ENCODE measurements at regions of chr22 and their contacts with region 1.

Region 1: DNA sequence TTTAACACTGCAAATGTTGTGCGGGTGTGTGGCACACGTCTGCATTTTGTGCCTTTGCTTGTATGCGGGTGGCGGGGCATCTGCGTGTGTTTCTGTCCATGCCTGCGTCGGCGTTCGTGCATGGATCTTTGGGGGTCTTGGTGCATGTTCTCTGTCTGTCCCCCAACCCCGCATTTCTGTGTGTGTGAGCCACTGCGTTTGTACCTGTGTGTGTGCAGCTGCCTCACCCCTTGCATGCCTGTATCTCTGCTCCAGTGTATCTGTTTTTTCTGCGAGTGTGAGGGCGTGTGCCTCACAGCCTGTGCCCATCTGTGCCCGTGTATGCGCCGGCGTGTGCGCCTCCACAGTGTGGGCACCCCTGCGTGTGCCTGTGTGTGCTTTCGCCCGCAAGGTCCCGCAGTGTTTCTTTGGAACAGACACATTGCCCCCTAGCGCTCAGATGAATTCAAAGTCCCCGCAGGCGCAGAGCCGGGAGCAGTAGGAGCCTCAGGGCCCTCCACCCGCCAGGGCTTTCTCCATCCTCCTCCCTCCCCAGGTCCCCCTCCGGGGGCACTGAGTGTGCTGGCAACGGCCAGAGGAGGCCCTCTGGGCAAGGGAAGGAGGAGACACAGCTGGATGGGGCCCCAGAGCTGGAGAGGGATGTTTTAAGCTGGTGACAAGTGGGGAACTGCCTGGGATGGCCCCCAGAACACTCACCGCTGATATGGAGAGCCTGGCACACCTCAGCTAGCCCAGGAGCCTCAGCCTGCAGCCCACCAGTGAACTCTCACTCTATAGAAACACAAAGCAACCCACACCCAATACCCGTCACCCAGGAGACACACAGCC is 3.1 kb upstream of the MN1 start:
- DNase-seq: peak; percentile 70 to 80
- ATAC-seq: peak; percentile 23 to 68 (median 61)
- H3K4me3 ChIP-seq: no peak overlapping the region
- H3K27ac ChIP-seq: no peak overlapping the region
- H3K4me1 ChIP-seq: peaks cover 0 to 34% (median 22%) of the 10 kb centered on the region in 9 donors
- H3K27me3 ChIP-seq: peaks cover 0 to 49% (median 0%) of the 10 kb centered on the region in 7 donors
- CTCF ChIP-seq: peak; percentile 67 to 85 (median 75)

Region 2: GRCh38 chr22:26681395-26681821 is 1123.3 kb before region 1 on chr22:
- intact Hi-C with region 1: loop called in 4 of 10 experiments (anchors 10 kb)
- DNase-seq: no peak
- ATAC-seq: peak in 1 of 8 donors; percentile 46
- H3K4me3 ChIP-seq: no peak overlapping the region
- H3K27ac ChIP-seq: no peak overlapping the region
- H3K4me1 ChIP-seq: peaks cover 0 to 17% (median 0%) of the 10 kb centered on the region in 9 donors
- H3K27me3 ChIP-seq: no peaks in the 10 kb centered on the region
- CTCF ChIP-seq: no peak

Region 3: DNA sequence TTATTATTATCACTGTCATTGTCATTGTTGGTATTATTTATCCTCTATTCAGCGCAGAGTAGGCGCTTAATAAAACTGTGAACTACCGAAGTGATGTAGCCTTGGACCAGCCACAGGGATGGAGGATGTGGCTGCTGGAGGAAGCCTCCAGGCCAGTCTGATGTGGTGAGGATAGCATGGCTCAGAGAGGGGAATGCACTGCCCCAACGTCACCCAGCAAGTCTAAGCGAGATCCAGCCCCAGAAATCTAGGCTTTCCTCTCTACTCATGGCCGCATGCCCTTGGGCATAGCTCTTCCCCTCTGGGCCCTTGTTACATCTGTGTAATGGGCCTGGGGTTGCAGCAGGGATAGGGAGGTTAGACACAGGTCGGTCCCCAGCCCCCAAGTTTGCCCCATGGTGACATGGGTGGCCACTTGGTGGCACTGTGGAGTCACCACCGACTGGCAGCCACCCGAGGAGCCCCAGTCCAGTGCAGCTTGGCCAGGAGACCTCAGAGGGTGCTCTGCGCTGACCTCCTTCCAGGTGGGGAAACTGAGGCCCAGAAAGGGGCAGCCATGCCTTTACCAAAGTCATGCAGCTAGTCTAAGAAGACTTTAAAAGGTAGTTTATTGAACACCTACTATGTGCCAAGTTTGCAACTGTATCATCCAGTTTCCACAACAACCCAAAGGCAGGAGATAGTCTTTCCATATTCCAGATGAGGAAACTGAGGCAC is 398.9 kb before region 1 on chr22:
- intact Hi-C with region 1: loop called (anchors 1 to 10 kb)
- DNase-seq: peak; percentile 36 to 68
- ATAC-seq: peak in 7 of 8 donors; percentile 66 to 88 (median 76)
- H3K4me3 ChIP-seq: no peak overlapping the region
- H3K27ac ChIP-seq: no peak overlapping the region
- H3K4me1 ChIP-seq: no peaks in the 10 kb centered on the region
- H3K27me3 ChIP-seq: peaks cover 0 to 34% (median 18%) of the 10 kb centered on the region in 7 donors
- CTCF ChIP-seq: peak; percentile 58 to 82 (median 77)

Region 4: DNA sequence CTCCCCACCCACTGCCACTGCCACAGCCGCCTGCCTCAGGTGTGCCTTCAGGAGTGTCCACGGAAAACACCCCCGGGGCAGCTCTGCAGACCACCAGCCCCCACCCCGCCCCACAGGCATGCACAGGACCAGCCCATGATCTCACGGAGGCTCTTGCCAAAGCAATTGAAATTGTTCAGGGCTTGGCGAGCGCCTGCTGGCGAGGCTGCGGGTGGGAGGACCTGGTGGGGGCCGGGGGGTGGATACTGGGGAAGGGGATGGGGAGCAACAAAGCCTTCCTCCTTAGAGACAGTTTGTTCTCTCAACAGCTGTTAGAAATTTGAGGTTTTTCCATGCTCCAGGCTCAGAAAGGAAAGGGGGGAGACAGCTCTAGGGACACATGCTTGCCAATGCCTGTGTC is 277.8 kb before region 1 on chr22:
- intact Hi-C with region 1: loop called in 1 of 10 experiments (anchors 10 kb)
- DNase-seq: no peak
- ATAC-seq: peak in 1 of 8 donors; percentile 38
- H3K4me3 ChIP-seq: no peak overlapping the region
- H3K27ac ChIP-seq: no peak overlapping the region
- H3K4me1 ChIP-seq: peaks cover 0 to 3% (median 0%) of the 10 kb centered on the region in 9 donors
- H3K27me3 ChIP-seq: peaks cover 0 to 5% (median 0%) of the 10 kb centered on the region in 7 donors
- CTCF ChIP-seq: no peak

Region 5: DNA sequence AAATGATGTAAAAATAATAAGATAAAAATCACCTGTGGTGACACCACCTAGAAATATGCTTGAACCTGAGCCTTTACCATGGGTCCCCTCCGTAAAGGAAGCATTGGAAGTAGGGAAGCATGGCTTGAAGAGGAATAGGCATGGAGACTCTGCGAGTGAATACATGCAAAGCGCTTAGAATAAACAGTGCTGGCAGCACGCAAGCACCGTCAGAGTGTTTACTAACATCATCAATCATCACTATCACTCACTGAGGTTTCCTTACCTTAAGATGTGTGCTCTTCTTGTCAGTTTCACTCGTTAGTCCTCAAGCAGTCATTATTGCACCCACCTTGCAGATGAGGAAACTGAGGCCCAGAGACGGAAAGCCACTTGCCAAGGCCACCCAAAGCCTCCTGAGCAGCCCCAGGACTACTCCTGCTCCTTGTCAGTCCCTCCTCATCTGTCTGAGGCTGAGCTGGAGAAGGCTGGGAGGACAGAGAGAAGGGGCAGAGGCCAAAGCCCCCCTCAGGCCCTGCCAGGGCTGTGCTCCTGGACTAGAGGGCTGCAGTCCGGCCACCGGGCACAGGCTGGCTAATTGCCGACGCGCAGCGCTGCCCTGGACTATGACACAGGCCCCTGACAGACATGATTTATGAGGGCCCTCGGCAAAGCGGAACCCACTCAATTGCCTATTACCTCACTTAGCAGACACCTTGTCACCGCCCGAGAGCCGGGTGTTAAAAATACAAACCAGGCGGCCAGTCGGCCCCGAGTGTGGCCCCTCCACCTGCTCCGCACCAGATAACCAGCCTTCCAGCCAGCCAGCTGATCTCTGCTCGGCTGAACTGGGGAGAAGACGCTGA is 172.0 kb before region 1 on chr22:
- intact Hi-C with region 1: loop called in 4 of 10 experiments (anchors 5 to 10 kb)
- DNase-seq: peak; percentile 71 to 80
- ATAC-seq: peak; percentile 64 to 88 (median 86)
- H3K4me3 ChIP-seq: no peak overlapping the region
- H3K27ac ChIP-seq: peak overlapping the region in 4 of 10 donors; percentile 9 to 65 (median 26)
- H3K4me1 ChIP-seq: peaks cover 0 to 29% (median 9%) of the 10 kb centered on the region in 9 donors
- H3K27me3 ChIP-seq: peaks cover 0 to 3% (median 0%) of the 10 kb centered on the region in 7 donors
- CTCF ChIP-seq: no peak

Region 6: DNA sequence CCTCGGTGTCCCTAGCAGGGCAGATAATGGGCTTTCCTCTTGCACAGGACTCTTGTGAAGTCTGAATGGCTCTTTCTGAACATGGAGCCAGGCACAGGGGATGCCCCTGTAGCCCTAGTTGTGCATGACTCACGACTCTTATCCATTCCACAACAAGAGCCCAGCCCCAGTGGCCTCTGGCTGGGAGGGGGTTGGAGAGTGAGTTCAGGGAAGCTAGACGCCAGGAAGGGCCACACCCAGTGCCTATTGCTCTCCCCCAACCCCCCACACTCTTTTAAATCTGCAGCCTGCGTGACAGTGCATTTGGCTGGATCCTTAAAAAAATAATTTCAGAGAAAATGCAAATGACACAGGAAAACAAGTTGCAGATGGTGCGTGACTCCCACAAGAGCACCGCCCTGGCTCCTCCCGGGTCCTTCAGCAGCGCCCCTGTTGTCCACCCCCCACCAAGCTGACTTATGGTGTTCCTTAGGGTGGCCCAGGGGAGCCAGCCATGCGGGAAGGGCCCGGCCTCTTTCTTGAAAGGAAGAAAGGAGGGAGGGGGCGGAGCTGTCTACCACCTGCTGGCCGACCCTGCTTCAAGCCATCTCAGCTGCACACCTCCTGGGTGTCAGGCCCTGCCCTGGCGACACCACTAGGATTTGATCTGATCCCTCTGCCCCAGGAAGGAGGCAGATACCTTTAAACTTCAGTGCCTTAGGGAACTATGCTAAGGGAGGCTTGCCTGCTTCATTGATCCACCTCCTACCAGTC is 77.8 kb before region 1 on chr22:
- intact Hi-C with region 1: loop called in 4 of 10 experiments (anchors 2 to 10 kb)
- DNase-seq: peak; percentile 70 to 79
- ATAC-seq: peak; percentile 80 to 96 (median 94)
- H3K4me3 ChIP-seq: peak overlapping the region in 3 of 10 donors; percentile 8 to 12 (median 8)
- H3K27ac ChIP-seq: peak overlapping the region; percentile 70 to 92 (median 90)
- H3K4me1 ChIP-seq: peaks cover 4 to 35% (median 20%) of the 10 kb centered on the region in 9 donors
- H3K27me3 ChIP-seq: no peaks in the 10 kb centered on the region
- CTCF ChIP-seq: peak in 1 of 9 donors; percentile 6

Measured in heart right ventricle (tissue), 16 donors.